K562 (cell line): ENCODE measurements at regions of chr11 and their contacts with region 1.

Region 1: DNA sequence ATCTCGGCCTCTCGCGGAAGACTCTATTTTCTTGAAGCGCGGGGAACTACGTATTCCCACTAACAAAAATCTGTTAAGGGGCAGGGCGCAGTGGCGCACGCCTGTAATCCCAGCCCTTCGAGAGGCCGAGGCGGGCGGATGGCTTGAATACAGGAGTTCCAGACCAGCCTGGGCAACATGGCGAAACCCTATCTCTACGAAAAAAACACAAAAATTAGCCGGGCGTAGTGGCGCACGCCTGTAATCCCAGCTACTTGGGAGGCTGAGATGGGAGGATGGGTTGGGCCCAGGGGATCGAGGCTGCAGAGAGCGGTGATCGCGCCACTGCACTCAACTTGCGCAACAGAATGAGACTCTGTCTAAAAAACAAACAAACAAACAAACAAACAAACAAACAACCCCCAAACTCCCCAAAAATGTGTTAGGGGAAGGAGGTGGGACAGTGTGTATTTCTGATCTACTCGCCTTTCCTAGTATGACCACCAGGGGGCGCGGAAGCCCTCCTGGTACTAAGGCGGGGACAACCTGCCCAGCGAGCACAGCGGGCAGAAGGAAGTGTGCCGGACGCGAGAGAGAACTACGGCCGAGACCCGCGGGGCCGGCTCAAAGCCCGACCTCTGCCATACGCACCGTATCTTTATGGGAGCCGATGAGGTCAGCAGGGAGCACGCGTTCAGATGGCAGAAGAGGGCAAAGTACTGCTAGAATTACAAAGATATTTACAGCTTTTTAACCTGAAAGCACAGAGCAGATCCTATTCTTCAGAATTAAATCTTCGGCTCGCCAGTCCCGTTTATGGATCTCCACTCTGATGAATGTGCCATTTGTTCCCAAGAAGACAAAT is 1.3 kb upstream of the STX3 start:
- DNase-seq: peak; percentile 87 to 90 (median 88)
- ATAC-seq: peak; percentile 67
- H3K4me3 ChIP-seq: peak overlapping the region; percentile 94
- H3K27ac ChIP-seq: peak overlapping the region; percentile 88; the same call in 2 of the 3 replicates
- H3K4me1 ChIP-seq: peaks cover 19 to 33% of the 10 kb centered on the region in 2 experiments; a peak in 4 of 5 replicates
- H3K27me3 ChIP-seq: no peaks in the 10 kb centered on the region
- CTCF ChIP-seq: peak; percentile 86 to 93 (median 87)
- EP300 ChIP-seq: no peak
- POLR2A ChIP-seq: no peak
- RAD21 ChIP-seq: peak; percentile 88 to 91

Region 2: GRCh38 chr11:59550368-59550841 is 203.5 kb before region 1 on chr11:
- CTCF ChIA-PET with region 1: no interaction called
- POLR2A ChIA-PET with region 1: no interaction called
- in situ Hi-C with region 1: no loop called
- intact Hi-C with region 1: loop called (anchors 5 kb)
- DNase-seq: peak; percentile 74 to 97 (median 76)
- ATAC-seq: peak; percentile 82
- H3K4me3 ChIP-seq: peak overlapping the region; percentile 57
- H3K27ac ChIP-seq: peak overlapping the region; percentile 100
- H3K4me1 ChIP-seq: peaks cover 22 to 31% of the 10 kb centered on the region in 2 experiments; a peak in 4 of 5 replicates
- H3K27me3 ChIP-seq: no peaks in the 10 kb centered on the region
- CTCF ChIP-seq: peak; percentile 59 to 70 (median 62)
- EP300 ChIP-seq: peak; percentile 49
- POLR2A ChIP-seq: no peak
- RAD21 ChIP-seq: peak; percentile 26 to 64; a peak in 3 of 4 replicates

Region 3: GRCh38 chr11:59706518-59707285 is 47.2 kb before region 1 on chr11:
- CTCF ChIA-PET with region 1: no interaction called
- POLR2A ChIA-PET with region 1: interaction called, 3 read pairs
- in situ Hi-C with region 1: no loop called
- intact Hi-C with region 1: loop called (anchors 5 kb)
- DNase-seq: peak; percentile 48 to 91 (median 62)
- ATAC-seq: peak; percentile 89
- H3K4me3 ChIP-seq: no peak overlapping the region
- H3K27ac ChIP-seq: peak overlapping the region; percentile 46; the same call in 1 of the 3 replicates
- H3K4me1 ChIP-seq: peaks cover 0 to 15% of the 10 kb centered on the region in 2 experiments; a peak in 3 of 5 replicates
- H3K27me3 ChIP-seq: no peaks in the 10 kb centered on the region
- CTCF ChIP-seq: no peak
- EP300 ChIP-seq: peak; percentile 96
- POLR2A ChIP-seq: no peak
- RAD21 ChIP-seq: no peak

Region 4: GRCh38 chr11:59802639-59803176 is 48.8 kb after region 1 on chr11:
- CTCF ChIA-PET with region 1: interaction called, 28 read pairs
- POLR2A ChIA-PET with region 1: interaction called, 8 read pairs
- in situ Hi-C with region 1: loop called (anchors 5 kb)
- intact Hi-C with region 1: loop called (anchors 1 kb)
- DNase-seq: peak; percentile 39 to 74 (median 54)
- ATAC-seq: peak; percentile 61
- H3K4me3 ChIP-seq: no peak overlapping the region
- H3K27ac ChIP-seq: no peak overlapping the region
- H3K4me1 ChIP-seq: no peaks in the 10 kb centered on the region; a peak in 1 of 5 replicates
- H3K27me3 ChIP-seq: no peaks in the 10 kb centered on the region
- CTCF ChIP-seq: peak; percentile 63 to 88 (median 63)
- EP300 ChIP-seq: no peak
- POLR2A ChIP-seq: no peak
- RAD21 ChIP-seq: peak; percentile 85 to 86

Region 5: DNA sequence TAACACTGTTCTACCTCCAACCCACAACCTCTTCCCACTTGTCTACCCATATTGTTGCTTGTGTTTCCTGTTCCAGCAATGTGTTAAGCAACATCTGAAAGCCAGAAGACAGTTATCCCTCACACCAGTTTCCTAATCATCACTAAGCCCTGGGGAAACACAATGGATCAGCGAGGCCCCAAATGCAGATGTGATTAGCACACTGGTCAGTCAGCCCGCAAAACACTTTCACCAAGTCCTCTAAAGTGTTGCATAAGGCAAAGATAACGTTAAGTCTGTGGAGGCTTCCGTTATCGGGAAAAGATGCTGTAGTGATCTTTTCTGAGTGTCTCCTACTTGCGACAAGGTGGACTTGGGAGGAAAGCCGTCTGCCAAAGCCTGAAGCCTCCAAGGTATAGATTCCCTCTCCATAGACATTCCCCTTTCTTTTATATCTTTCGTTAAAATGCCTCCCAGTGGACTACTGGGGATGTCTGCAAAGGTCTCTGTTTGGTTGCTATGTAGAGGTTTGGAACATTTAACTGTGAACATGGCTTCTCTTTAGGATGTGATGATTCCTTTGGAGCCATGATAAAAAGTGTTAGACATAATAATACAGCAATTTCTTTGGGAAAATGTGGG is 302.6 kb after region 1 on chr11 and contains the start of gene MS4A3:
- CTCF ChIA-PET with region 1: no interaction called
- POLR2A ChIA-PET with region 1: no interaction called
- in situ Hi-C with region 1: no loop called
- intact Hi-C with region 1: loop called (anchors 10 kb)
- DNase-seq: peak; percentile 20 to 76 (median 34)
- ATAC-seq: peak; percentile 90
- H3K4me3 ChIP-seq: peak within 1 kb of the TSS; percentile 19; the same call in 1 of the 2 replicates
- H3K27ac ChIP-seq: peak within 1 kb of the TSS; percentile 62; the same call in 2 of the 3 replicates
- H3K4me1 ChIP-seq: peaks cover 3 to 25% of the 10 kb centered on the region in 2 experiments; a peak in 4 of 5 replicates
- H3K27me3 ChIP-seq: no peaks in the 10 kb centered on the region
- CTCF ChIP-seq: no peak
- EP300 ChIP-seq: peak; percentile 78
- POLR2A ChIP-seq: no peak
- RAD21 ChIP-seq: peak in 1 of 2 experiments; percentile 47
- polyA plus RNA-seq, gene MS4A3: 84.8 to 94.5 TPM